ENCODE measurements at regions of chr1 and their contacts with region 1.

Region 1: GRCh38 chr1:206544562-206545257 is 37.4 kb downstream of the RASSF5 start:
- DNase-seq: peak; percentile 86
- ATAC-seq: peak; percentile 92
- H3K4me3 Mint-ChIP-seq: no peak overlapping the region
- H3K27ac Mint-ChIP-seq: peak overlapping the region; percentile 28
- H3K4me1 Mint-ChIP-seq: peaks cover 13% of the 10 kb centered on the region
- H3K27me3 Mint-ChIP-seq: no peaks in the 10 kb centered on the region

Region 2: DNA sequence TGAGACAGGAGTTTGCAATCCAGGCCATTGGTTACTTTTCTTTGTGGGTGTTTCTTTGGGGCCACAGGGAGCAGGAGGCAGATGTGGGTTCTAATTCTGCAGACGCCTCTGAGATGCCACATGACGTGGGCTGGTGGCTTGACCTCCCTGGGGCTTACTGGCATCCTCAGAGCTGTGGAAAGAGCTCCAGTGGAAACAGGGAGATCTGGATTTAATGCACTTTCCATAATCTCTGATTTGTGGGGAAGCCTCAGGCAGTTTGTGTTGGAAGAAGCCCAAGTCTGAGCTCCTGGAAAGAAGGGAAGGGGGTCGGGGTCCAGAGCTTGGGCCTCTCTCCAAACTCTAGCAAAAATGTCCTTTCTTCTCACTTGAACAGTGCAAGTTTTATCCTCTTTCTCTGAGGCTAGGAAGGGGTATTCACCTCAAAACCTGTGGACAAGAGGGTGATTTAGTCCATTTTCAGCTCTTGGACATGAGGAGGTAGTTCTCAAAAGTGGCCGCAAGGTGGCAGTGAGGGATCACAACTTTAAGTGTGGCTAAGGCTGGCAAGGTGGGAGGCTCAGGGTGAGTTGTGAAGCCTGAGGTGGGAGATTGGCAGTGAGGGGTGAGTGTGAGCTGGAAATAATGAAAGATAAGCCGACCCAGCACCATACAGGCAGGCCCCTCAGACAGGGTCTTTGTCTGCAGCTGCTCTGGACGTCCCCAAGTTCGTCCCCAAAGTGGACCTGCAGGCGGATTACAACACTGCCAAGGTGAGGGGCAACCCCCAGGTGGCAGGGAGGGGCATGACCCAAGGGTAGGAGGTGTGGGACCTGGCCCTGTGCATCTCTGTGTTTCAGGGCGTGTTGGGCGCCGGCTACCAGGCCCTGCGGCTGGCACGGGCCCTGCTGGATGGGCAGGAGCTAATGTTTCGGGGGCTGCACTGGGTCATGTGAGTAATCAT is 65.3 kb before region 1 on chr1:
- CTCF ChIA-PET with region 1: interaction called, 18 read pairs
- DNase-seq: peak; percentile 80
- ATAC-seq: peak; percentile 72
- H3K4me3 Mint-ChIP-seq: no peak overlapping the region
- H3K27ac Mint-ChIP-seq: peak overlapping the region; percentile 61
- H3K4me1 Mint-ChIP-seq: peaks cover 17% of the 10 kb centered on the region
- H3K27me3 Mint-ChIP-seq: no peaks in the 10 kb centered on the region

Region 3: GRCh38 chr1:206556750-206557635 is 12.3 kb after region 1 on chr1:
- CTCF ChIA-PET with region 1: interaction called, 63 read pairs
- DNase-seq: peak; percentile 95
- ATAC-seq: peak; percentile 72
- H3K4me3 Mint-ChIP-seq: peak overlapping the region; percentile 98
- H3K27ac Mint-ChIP-seq: peak overlapping the region; percentile 96
- H3K4me1 Mint-ChIP-seq: peaks cover 69% of the 10 kb centered on the region
- H3K27me3 Mint-ChIP-seq: no peaks in the 10 kb centered on the region

Region 4: DNA sequence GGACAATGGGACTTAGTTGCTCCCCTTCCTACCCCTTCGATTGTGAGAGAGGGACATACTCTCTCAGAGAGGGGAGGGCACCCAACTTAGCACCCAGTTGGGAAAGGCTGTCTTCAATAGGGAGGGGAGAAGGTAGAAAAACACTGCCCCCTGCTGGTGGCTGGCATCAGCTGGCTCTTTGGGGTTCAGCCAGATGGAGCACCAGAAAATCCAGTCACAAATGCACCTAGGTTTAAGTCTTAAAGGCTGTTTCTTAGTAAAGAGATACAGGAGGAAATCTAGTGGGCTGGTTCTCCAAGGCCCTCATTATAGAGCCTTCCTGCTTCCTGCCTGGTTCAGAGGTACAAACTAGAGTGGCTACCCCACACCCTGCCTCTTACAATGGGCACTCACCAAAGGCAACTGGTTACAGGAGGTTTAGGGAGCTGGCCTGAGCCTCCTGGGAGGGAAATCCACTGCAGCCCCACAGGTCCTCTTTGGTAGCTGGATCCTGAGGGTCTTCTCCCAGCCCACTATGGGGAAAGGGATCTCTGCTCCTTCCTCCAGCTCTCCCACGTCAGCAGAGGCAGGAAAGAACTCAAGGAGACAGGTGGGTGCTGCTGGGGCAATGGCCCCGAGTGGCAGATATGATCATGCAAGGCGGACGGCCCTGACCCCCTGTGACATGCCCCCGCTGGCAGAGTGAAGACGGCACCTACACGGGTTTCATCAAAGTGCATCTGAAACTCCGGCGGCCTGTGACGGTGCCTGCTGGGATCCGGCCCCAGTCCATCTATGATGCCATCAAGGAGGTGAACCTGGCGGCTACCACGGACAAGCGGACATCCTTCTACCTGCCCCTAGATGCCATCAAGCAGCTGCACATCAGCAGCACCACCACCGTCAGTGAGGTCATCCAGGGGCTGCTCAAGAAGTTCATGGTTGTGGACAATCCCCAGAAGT is 39.3 kb after region 1 on chr1:
- CTCF ChIA-PET with region 1: interaction called, 490 read pairs
- DNase-seq: peak; percentile 88
- ATAC-seq: peak; percentile 24
- H3K4me3 Mint-ChIP-seq: peak overlapping the region; percentile 10
- H3K27ac Mint-ChIP-seq: peak overlapping the region; percentile 95
- H3K4me1 Mint-ChIP-seq: peaks cover 93% of the 10 kb centered on the region
- H3K27me3 Mint-ChIP-seq: no peaks in the 10 kb centered on the region

Region 5: GRCh38 chr1:206658264-206658980 is 113.7 kb after region 1 on chr1:
- CTCF ChIA-PET with region 1: interaction called, 30 read pairs
- DNase-seq: peak; percentile 64
- ATAC-seq: peak; percentile 82
- H3K4me3 Mint-ChIP-seq: no peak overlapping the region
- H3K27ac Mint-ChIP-seq: no peak overlapping the region
- H3K4me1 Mint-ChIP-seq: peaks cover 19% of the 10 kb centered on the region
- H3K27me3 Mint-ChIP-seq: peaks cover 21% of the 10 kb centered on the region

Measured in activated CD8-positive, alpha-beta memory T cell treated with anti-CD3 and anti-CD28 coated beads, Interleukin-2, amount 10 ng/mL, durations not matched to agents 7 days and 5 days (primary cell).